Transverse colon (tissue), 4 donors: ENCODE measurements at regions of chr7 and their contacts with region 1.

Region 1: DNA sequence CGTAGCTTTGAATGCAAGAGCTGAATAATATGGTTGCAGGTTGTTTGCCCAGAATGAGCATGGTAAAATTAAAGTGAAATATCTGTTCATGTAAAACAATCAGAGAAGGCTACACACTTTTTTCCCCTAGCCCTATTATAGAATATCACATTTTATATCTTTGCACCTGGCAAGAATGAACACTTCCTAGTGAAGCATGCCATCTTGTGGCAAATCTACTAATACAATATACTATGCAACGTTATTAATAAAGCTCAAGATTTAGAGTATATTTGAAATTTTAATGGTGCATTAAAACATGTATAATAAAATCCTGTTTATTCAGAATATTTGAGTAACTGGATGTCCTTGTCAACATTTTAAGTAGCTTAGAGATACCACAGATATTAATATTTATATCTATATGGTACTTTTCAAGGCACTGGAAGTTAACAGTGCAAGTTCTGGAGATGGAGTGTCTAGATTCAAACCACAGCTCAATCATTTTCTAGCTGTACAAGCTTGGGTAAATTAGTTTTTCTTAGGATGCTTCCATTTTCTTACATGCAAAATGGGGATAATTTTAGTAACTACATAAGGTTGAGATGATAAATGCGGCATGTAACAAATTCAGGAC is 643.1 kb upstream of the SEMA3D start:
- DNase-seq: no peak
- H3K4me3 ChIP-seq: no peak overlapping the region
- H3K27ac ChIP-seq: no peak overlapping the region
- H3K4me1 ChIP-seq: no peaks in the 10 kb centered on the region
- H3K27me3 ChIP-seq: no peaks in the 10 kb centered on the region
- CTCF ChIP-seq: peak in 2 of 5 experiments; percentile 21 to 35
- EP300 ChIP-seq: no peak
- POLR2A ChIP-seq: no peak

Region 2: GRCh38 chr7:83957333-83957732 is 1872.6 kb before region 1 on chr7:
- in situ Hi-C with region 1: loop called in 1 of 4 experiments (anchors 25 kb)
- intact Hi-C with region 1: no loop called
- DNase-seq: no peak
- H3K4me3 ChIP-seq: no peak overlapping the region
- H3K27ac ChIP-seq: no peak overlapping the region
- H3K4me1 ChIP-seq: no peaks in the 10 kb centered on the region
- H3K27me3 ChIP-seq: no peaks in the 10 kb centered on the region
- CTCF ChIP-seq: no peak
- EP300 ChIP-seq: no peak
- POLR2A ChIP-seq: no peak

Region 3: DNA sequence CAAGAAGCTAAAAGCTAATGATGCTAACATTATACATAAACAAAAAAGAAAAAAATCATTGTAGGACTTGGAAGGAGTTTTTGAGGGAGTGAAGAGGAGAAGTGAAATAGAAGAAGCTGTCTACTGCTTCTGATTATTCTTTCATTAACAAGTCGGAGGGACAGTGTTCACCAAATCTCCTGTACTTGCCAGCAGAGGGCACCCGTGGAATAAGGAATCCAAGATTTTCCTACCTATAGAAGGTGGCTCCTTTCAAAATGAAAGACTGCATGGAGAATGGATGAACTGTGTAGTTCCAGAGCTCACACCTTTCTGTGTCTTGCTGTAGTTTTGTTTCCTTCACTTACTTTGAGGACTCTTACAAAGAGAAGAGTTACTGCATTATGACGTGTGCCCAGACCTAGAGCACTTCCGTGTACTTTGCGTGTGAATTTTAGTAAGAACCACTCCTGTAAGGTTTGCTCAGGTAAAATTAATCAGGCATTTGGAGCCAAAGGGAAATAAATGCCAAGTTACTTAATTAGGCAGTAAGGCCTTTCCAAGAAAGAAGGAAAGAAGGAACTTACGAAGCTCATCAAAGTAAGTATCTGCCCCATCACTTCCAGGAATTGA is 788.2 kb before region 1 on chr7:
- in situ Hi-C with region 1: loop called in 1 of 4 experiments (anchors 25 kb)
- intact Hi-C with region 1: no loop called
- DNase-seq: peak; percentile 68
- H3K4me3 ChIP-seq: no peak overlapping the region
- H3K27ac ChIP-seq: no peak overlapping the region
- H3K4me1 ChIP-seq: no peaks in the 10 kb centered on the region
- H3K27me3 ChIP-seq: no peaks in the 10 kb centered on the region
- CTCF ChIP-seq: peak; percentile 51 to 62 (median 55)
- EP300 ChIP-seq: no peak
- POLR2A ChIP-seq: no peak

Region 4: DNA sequence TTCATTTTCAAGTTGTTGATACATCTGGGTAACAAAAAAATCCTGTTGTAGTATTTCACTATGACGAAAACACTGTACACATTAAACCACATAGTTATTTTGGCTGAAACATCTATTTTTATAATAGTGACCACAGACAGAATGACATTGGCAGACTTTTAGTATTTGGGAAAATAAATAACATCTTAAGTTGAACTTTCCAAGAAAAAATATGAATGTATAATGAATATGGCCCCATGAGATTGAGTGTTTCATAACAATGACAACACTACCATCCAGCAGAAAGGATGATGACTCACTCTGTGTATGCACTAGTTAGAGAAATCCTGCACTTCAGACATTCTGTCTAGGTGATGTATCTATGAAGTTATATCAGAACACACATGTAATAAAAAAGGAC is 761.1 kb before region 1 on chr7:
- in situ Hi-C with region 1: loop called in 1 of 4 experiments (anchors 25 kb)
- intact Hi-C with region 1: no loop called
- DNase-seq: no peak
- H3K4me3 ChIP-seq: no peak overlapping the region
- H3K27ac ChIP-seq: no peak overlapping the region
- H3K4me1 ChIP-seq: no peaks in the 10 kb centered on the region
- H3K27me3 ChIP-seq: no peaks in the 10 kb centered on the region
- CTCF ChIP-seq: no peak
- EP300 ChIP-seq: no peak
- POLR2A ChIP-seq: no peak

Region 5: DNA sequence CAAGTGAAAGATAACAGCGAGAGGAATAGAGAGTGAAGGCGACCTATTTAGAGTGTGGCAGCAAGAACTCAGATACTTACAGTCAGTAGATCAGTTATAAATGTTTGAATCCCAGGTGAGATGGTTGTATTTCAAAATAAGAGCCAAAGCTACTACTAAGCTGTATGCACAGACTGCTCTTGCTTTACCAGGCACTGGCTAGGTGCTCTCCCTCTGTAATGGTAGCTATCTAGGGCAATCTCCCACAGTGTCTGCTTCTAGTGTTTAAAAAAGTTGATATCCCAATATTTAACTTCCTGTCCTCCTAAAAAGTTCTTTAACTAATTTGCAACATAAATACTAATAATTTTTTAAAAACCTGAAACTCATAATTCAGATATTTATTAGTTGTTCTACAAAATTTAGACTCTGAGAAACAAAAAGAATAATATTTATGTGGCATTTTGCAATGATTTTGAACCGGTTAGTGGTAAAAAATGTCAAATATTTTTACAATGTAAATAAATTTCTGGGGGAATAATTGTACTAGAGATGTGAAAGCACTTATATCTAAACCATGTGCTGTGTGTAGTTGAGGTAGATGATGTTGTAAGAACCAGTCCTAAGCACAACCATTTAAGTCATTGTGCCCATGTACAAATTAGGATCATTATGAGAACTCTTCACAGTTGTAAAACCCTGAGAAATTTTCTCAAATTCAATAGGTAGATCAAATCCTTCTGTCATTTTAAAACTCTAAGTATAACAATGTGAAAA is 293.8 kb before region 1 on chr7:
- in situ Hi-C with region 1: no loop called
- intact Hi-C with region 1: loop called (anchors 5 kb)
- DNase-seq: no peak
- H3K4me3 ChIP-seq: no peak overlapping the region
- H3K27ac ChIP-seq: no peak overlapping the region
- H3K4me1 ChIP-seq: no peaks in the 10 kb centered on the region
- H3K27me3 ChIP-seq: no peaks in the 10 kb centered on the region
- CTCF ChIP-seq: no peak
- EP300 ChIP-seq: no peak
- POLR2A ChIP-seq: no peak